Activated CD4-positive, alpha-beta memory T cell treated with anti-CD3 and anti-CD28 coated beads for 36 hours (primary cell): ENCODE measurements at regions of chr15 and their contacts with region 1.

Region 1: GRCh38 chr15:101008158-101009139 is 89.3 kb downstream of the LRRK1 start:
- DNase-seq: peak; percentile 90
- H3K4me3 Mint-ChIP-seq: peak overlapping the region; percentile 84
- H3K27ac Mint-ChIP-seq: no peak overlapping the region
- H3K4me1 Mint-ChIP-seq: peaks cover 19% of the 10 kb centered on the region
- H3K27me3 Mint-ChIP-seq: peaks cover 3% of the 10 kb centered on the region

Region 2: GRCh38 chr15:100341662-100342560 is 666.5 kb before region 1 on chr15 and contains the start of gene ADAMTS17:
- CTCF ChIA-PET with region 1: interaction called, 5 read pairs
- POLR2A ChIA-PET with region 1: no interaction called
- intact Hi-C with region 1: loop called (anchors 2 kb)
- DNase-seq: peak; percentile 95
- H3K4me3 Mint-ChIP-seq: peak within 1 kb of the TSS; percentile 54
- H3K27ac Mint-ChIP-seq: no peak within 1 kb of the TSS
- H3K4me1 Mint-ChIP-seq: peaks cover 15% of the 10 kb centered on the region
- H3K27me3 Mint-ChIP-seq: no peaks in the 10 kb centered on the region
- total RNA-seq, gene ADAMTS17: 0.99 to 1.2 TPM

Region 3: GRCh38 chr15:100627789-100628395 is 380.6 kb before region 1 on chr15:
- CTCF ChIA-PET with region 1: interaction called, 21 read pairs
- POLR2A ChIA-PET with region 1: no interaction called
- intact Hi-C with region 1: loop called (anchors 1 kb)
- DNase-seq: peak; percentile 69
- H3K4me3 Mint-ChIP-seq: no peak overlapping the region
- H3K27ac Mint-ChIP-seq: no peak overlapping the region
- H3K4me1 Mint-ChIP-seq: peaks cover 8% of the 10 kb centered on the region
- H3K27me3 Mint-ChIP-seq: no peaks in the 10 kb centered on the region

Region 4: GRCh38 chr15:100873029-100873677 is 135.3 kb before region 1 on chr15:
- CTCF ChIA-PET with region 1: interaction called, 6 read pairs
- POLR2A ChIA-PET with region 1: no interaction called
- intact Hi-C with region 1: loop called (anchors 1 kb)
- DNase-seq: peak; percentile 58
- H3K4me3 Mint-ChIP-seq: no peak overlapping the region
- H3K27ac Mint-ChIP-seq: no peak overlapping the region
- H3K4me1 Mint-ChIP-seq: no peaks in the 10 kb centered on the region
- H3K27me3 Mint-ChIP-seq: peaks cover 23% of the 10 kb centered on the region

Region 5: DNA sequence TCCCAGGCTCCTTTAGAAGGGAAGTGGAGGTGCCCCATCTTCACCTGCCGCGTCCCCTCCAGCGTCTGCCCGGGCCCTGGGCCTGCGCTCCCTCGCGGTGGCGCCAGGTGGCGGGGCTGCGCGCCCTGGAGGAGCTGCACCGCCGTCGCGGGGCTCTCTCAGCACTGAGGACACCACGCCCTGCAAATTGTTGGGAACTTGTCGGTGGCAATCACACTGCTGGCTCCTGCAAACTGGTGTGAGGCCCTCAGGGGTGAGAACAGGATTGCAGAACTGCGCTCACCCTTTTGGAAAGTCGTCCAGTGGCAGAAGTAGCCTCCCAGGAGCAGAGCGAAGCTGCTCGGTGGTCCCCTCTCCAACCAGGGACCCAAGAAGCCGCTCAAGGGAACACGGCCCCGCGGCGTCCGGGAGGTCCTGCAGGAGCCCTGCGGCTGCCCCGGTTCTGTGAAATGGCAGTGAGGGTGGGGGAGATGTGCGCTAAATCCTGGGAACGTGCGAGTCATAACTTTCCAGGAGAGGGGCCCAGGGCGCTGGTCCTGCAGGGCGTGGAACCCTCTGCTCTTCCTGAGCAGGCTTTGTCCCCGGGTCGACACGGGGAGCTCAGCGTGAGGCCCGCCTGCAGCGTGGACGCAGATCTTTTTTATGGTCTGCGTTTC is 90.3 kb before region 1 on chr15:
- CTCF ChIA-PET with region 1: interaction called, 218 read pairs
- POLR2A ChIA-PET with region 1: no interaction called
- intact Hi-C with region 1: loop called (anchors 1 kb)
- DNase-seq: peak; percentile 76
- H3K4me3 Mint-ChIP-seq: peak overlapping the region; percentile 67
- H3K27ac Mint-ChIP-seq: no peak overlapping the region
- H3K4me1 Mint-ChIP-seq: peaks cover 17% of the 10 kb centered on the region
- H3K27me3 Mint-ChIP-seq: peaks cover 45% of the 10 kb centered on the region

Region 6: DNA sequence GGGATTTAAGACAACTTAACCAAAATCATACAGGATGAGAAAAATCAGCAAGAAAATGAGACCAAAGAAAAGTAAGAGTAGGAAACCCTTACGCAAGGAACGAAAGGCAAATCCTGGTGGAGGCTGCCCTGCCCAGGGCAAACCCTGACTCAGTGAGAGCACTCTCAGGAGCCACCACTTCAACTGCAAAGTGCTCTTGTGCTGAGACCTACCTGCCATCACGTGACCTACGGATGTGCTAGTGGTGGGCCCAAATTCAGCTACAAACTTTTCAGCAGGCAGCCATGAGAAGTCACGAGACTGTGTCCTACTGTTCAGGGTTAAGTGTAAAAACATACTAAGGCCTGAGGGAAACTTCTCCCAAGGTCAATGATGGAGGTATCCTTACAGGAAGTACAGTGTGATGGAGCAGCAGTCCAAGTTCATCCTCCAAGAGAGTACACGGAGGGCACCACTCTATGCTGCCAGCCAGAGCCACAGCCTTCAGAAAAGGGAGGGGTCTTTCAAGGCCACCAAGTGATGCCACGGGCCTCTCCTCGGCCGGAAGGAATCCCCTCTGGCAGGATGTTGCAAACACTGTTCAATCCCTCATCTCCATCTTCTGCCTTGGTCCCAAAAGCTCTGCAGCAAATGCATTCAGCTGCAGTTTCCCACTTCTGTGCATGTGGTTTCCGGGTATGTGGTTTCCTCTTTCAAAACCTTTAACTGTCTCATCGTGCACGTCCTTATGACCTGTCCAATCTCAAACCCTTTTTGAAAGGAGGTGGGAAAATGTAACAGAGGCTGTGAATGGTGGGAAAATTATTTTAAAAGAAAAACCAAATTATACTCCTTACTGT is 233.9 kb after region 1 on chr15:
- CTCF ChIA-PET with region 1: interaction called, 16 read pairs
- POLR2A ChIA-PET with region 1: no interaction called
- intact Hi-C with region 1: no loop called
- DNase-seq: peak; percentile 68
- H3K4me3 Mint-ChIP-seq: peak overlapping the region; percentile 50
- H3K27ac Mint-ChIP-seq: peak overlapping the region; percentile 82
- H3K4me1 Mint-ChIP-seq: peaks cover 83% of the 10 kb centered on the region
- H3K27me3 Mint-ChIP-seq: no peaks in the 10 kb centered on the region

Region 7: DNA sequence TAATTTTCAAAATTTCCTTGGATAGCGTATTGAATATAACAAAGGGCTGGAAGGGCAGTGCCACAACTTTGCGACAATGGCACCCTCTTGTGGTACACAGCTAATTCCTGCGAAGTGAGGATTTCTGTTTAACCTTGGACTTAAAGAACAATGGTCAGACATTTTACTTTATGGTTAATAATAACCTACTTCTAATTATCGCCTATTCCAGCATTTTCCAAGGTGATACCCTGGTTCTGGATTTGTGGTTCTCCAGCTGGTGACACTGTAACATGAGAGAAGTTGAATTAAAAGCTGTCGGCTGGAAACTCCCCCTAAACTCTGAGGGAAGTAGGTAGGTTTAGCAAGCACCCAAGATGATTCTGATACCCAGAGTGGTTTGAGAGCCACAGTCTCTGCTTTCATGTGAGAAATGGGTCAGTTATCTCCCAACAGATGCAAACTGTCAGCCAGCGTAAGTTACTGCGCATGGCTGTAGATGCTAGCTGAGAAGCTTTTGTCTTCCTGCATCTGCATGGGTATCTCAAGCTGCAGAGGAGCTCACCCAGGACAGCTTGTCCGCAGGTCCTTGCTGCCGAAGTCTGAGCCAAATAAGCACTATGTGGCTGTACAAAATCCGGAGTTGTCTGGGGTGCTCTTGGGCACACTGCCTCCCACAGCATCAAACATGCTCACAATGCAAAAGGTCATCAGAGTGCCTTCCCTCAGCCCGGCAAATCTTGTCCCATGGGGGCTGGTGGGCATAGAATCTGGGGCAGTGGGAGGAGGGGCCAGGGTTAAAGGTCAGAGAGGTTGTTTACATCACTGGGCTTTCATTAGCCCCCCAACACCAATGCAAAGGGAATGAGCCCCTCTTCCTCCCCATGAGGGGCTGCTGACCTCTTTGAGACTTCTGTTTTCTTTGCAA is 250.0 kb after region 1 on chr15:
- CTCF ChIA-PET with region 1: interaction called, 35 read pairs
- POLR2A ChIA-PET with region 1: no interaction called
- intact Hi-C with region 1: no loop called
- DNase-seq: peak; percentile 62
- H3K4me3 Mint-ChIP-seq: peak overlapping the region; percentile 35
- H3K27ac Mint-ChIP-seq: no peak overlapping the region
- H3K4me1 Mint-ChIP-seq: peaks cover 10% of the 10 kb centered on the region
- H3K27me3 Mint-ChIP-seq: peaks cover 2% of the 10 kb centered on the region